PC-9 (cell line): ENCODE measurements at regions of chr17 and their contacts with region 1.

Region 1: DNA sequence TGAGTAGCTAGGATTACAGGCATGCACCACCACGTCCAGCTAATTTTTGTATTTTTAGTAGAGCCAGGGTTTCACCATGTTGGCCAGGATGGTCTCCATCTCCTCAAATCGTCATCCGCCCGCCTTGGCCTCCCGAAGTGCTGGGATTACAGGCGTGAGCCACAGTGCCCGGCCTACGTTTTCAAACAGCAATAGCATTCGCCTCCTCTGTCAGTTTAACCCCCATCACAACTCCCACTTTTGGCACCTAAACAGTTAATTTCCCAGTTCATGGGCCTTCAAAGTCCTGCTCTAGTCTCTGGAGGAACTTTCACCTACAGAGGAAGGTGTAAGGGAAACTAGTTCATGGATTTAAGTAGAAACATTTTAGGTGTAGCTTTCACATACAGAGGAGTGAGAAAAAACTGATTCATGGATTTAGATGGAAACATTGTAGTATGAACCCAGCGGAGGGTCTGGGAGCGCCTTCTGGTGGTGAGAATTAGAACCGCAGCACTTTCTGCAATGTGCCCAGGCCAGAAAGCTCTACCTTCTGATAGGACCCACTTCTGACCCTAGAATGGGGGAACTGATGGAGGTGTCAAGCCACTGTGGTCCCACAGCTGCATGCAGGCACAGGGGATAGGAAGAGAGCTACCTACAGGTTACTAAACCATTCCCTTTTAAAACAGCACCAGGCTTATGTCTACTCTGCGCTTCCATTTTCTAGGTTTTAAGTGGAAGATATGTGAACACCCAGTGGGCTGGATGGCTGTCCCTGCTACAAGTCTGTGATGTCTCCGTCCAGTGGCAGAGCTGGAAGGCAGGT is 12.0 kb upstream of the MEOX1 start:
- DNase-seq: peak; percentile 57 to 76
- H3K4me3 ChIP-seq: no peak overlapping the region
- H3K27ac ChIP-seq: no peak overlapping the region
- H3K4me1 ChIP-seq: peaks cover 40% of the 10 kb centered on the region
- H3K27me3 ChIP-seq: no peaks in the 10 kb centered on the region
- CTCF ChIP-seq: peak; percentile 95

Region 2: DNA sequence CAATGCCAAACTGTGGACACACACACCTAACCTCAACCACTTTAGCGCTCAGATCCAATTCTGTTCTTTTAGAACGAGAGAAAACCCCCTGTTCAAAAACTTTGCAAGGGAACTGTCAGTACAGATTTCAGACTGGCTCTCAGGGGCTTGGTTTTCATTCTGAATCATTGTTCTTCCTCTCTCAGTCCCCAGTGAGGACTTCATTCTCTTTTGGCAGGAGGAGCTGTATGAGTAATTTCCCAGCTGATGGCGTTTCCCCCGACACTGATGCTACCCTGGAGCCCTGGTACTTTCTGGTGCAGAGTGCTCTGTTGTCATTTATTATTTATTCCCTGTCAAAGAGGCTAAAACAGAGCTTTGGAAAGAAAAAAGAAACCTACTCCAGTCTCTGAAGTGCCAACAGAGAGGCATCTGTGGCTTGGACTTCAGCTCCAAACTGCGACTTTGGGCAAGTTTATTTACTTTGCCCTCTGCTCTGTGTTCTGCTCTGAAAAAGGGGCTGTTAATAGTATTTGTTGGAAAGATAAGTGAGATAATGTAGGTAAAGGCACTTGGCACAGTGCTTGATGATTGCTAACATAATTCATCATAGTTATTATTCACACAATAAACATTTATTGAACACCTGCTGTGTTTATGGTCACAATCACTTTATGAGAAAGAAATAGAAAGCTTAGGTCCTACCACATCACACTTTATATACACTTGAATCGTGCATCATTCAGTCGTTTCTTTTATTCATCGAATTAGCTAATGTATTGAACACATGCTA is 155.9 kb before region 1 on chr17:
- CTCF ChIA-PET with region 1: interaction called, 3 read pairs
- POLR2A ChIA-PET with region 1: no interaction called
- intact Hi-C with region 1: loop called (anchors 1 kb)
- DNase-seq: no peak
- H3K4me3 ChIP-seq: no peak overlapping the region
- H3K27ac ChIP-seq: no peak overlapping the region
- H3K4me1 ChIP-seq: no peaks in the 10 kb centered on the region
- H3K27me3 ChIP-seq: no peaks in the 10 kb centered on the region
- CTCF ChIP-seq: no peak

Region 3: DNA sequence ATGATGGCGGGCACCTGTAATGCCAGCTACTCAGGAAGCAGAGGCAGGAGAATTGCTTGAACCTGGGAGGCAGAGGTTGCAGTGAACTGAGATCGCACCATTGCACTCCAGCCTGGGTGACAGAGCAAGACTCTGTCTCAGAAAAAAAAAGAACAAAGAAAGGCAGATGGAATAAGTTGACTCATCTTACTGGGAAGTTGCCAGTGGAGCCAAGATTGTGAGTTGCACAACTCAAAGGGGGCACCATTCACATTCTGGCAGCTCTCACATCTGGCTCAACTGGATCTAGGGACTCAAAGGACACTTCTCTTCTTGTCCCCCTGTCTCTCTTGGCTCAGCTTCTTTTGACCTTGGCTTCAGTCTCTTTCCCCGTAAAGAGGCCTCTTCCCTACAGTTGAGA is 73.9 kb before region 1 on chr17:
- CTCF ChIA-PET with region 1: no interaction called
- POLR2A ChIA-PET with region 1: no interaction called
- intact Hi-C with region 1: loop called (anchors 5 kb)
- DNase-seq: peak in 1 of 2 experiments; percentile 32
- H3K4me3 ChIP-seq: no peak overlapping the region
- H3K27ac ChIP-seq: no peak overlapping the region
- H3K4me1 ChIP-seq: peaks cover 8% of the 10 kb centered on the region
- H3K27me3 ChIP-seq: no peaks in the 10 kb centered on the region
- CTCF ChIP-seq: no peak

Region 4: GRCh38 chr17:43790311-43790940 is 116.7 kb after region 1 on chr17:
- CTCF ChIA-PET with region 1: no interaction called
- POLR2A ChIA-PET with region 1: interaction called, 13 read pairs
- intact Hi-C with region 1: no loop called
- DNase-seq: no peak
- H3K4me3 ChIP-seq: no peak overlapping the region
- H3K27ac ChIP-seq: no peak overlapping the region
- H3K4me1 ChIP-seq: no peaks in the 10 kb centered on the region; the same call in 1 of the 2 replicates
- H3K27me3 ChIP-seq: peaks cover 12% of the 10 kb centered on the region; the same call in 1 of the 2 replicates
- CTCF ChIP-seq: peak; percentile 41; the same call in 1 of the 2 replicates